ENCODE measurements at regions of chr7 and their contacts with region 1.

Region 1: GRCh38 chr7:1703871-1704810 is 34.1 kb downstream of the ELFN1 start:
- DNase-seq: peak; percentile 36
- H3K4me3 ChIP-seq: no peak overlapping the region
- H3K27ac ChIP-seq: no peak overlapping the region
- H3K4me1 ChIP-seq: peaks cover 0 to 20% of the 10 kb centered on the region in 2 experiments; a peak in 1 of 4 replicates
- H3K27me3 ChIP-seq: no peaks in the 10 kb centered on the region
- CTCF ChIP-seq: no peak
- EP300 ChIP-seq: no peak
- RAD21 ChIP-seq: no peak

Region 2: GRCh38 chr7:1716263-1717094 is 12.3 kb after region 1 on chr7:
- CTCF ChIA-PET with region 1: interaction called, 11 read pairs
- POLR2A ChIA-PET with region 1: no interaction called
- DNase-seq: peak; percentile 86
- H3K4me3 ChIP-seq: no peak overlapping the region; a peak in 1 of 4 replicates
- H3K27ac ChIP-seq: peak overlapping the region in 1 of 2 experiments; percentile 67; a peak in 2 of 4 replicates
- H3K4me1 ChIP-seq: peaks cover 0 to 64% of the 10 kb centered on the region in 2 experiments; a peak in 2 of 4 replicates
- H3K27me3 ChIP-seq: no peaks in the 10 kb centered on the region; the same call in 1 of the 2 replicates
- CTCF ChIP-seq: no peak
- EP300 ChIP-seq: no peak
- RAD21 ChIP-seq: no peak; the same call in 1 of the 2 replicates